SK-N-SH (cell line): ENCODE measurements at regions of chr3 and their contacts with region 1.

Region 1: GRCh38 chr3:128426128-128426921 is 40.4 kb downstream of the DNAJB8 start:
- DNase-seq: peak; percentile 95
- H3K4me3 ChIP-seq: peak overlapping the region; percentile 23 to 24; a peak in 2 of 4 replicates
- H3K27ac ChIP-seq: peak overlapping the region in 1 of 2 experiments; percentile 71; a peak in 2 of 4 replicates
- H3K4me1 ChIP-seq: peaks cover 0 to 76% of the 10 kb centered on the region in 2 experiments; a peak in 2 of 4 replicates
- H3K27me3 ChIP-seq: no peaks in the 10 kb centered on the region
- CTCF ChIP-seq: peak; percentile 72
- EP300 ChIP-seq: no peak
- RAD21 ChIP-seq: peak; percentile 84

Region 2: DNA sequence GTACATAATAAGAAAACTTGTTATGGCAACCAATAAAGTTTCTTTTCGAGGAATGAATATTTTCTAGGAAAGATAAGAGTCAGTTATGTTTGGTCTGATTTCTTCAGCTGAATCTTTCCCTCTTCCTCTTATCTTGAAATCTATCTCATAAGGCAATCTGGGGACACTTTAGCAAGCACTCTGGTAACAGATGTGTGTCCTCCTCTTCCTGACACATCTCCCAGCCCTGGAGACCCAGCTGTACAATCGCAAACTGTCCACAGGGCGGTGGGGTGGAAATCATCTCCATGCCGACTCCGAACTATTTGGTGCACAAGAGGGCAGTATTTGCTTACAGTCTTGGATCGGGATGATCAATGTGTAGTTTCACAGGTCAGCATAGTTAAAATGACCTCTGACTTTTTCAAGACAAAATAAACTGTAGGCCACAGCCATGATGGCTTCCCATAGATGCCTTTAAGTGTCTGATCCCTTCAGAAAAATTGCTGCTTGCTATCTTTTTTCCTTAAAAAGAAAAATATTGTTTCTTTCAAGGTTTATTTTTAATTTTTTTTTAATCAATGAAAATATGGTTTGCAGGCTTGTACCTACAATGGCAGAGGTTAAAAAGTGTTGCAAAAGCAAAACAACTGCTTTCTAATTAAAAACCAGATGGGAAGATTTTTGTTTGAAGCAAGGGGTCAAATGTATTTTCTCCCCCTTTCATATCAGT is 255.4 kb before region 1 on chr3:
- CTCF ChIA-PET with region 1: interaction called, 19 read pairs
- POLR2A ChIA-PET with region 1: no interaction called
- DNase-seq: peak; percentile 80
- H3K4me3 ChIP-seq: no peak overlapping the region; a peak in 1 of 4 replicates
- H3K27ac ChIP-seq: peak overlapping the region in 1 of 2 experiments; percentile 76; a peak in 2 of 4 replicates
- H3K4me1 ChIP-seq: peaks cover 0 to 73% of the 10 kb centered on the region in 2 experiments; a peak in 2 of 4 replicates
- H3K27me3 ChIP-seq: no peaks in the 10 kb centered on the region
- CTCF ChIP-seq: peak; percentile 92
- EP300 ChIP-seq: peak in 1 of 2 experiments; percentile 40; a peak in 1 of 4 replicates
- RAD21 ChIP-seq: peak; percentile 98

Region 3: GRCh38 chr3:128285056-128285966 is 141.0 kb before region 1 on chr3:
- CTCF ChIA-PET with region 1: no interaction called
- POLR2A ChIA-PET with region 1: no interaction called
- DNase-seq: no peak
- H3K4me3 ChIP-seq: no peak overlapping the region
- H3K27ac ChIP-seq: no peak overlapping the region; a peak in 2 of 4 replicates
- H3K4me1 ChIP-seq: peaks cover 5 to 68% of the 10 kb centered on the region in 2 experiments; a peak in 3 of 4 replicates
- H3K27me3 ChIP-seq: no peaks in the 10 kb centered on the region
- CTCF ChIP-seq: no peak
- EP300 ChIP-seq: no peak
- RAD21 ChIP-seq: no peak

Region 4: DNA sequence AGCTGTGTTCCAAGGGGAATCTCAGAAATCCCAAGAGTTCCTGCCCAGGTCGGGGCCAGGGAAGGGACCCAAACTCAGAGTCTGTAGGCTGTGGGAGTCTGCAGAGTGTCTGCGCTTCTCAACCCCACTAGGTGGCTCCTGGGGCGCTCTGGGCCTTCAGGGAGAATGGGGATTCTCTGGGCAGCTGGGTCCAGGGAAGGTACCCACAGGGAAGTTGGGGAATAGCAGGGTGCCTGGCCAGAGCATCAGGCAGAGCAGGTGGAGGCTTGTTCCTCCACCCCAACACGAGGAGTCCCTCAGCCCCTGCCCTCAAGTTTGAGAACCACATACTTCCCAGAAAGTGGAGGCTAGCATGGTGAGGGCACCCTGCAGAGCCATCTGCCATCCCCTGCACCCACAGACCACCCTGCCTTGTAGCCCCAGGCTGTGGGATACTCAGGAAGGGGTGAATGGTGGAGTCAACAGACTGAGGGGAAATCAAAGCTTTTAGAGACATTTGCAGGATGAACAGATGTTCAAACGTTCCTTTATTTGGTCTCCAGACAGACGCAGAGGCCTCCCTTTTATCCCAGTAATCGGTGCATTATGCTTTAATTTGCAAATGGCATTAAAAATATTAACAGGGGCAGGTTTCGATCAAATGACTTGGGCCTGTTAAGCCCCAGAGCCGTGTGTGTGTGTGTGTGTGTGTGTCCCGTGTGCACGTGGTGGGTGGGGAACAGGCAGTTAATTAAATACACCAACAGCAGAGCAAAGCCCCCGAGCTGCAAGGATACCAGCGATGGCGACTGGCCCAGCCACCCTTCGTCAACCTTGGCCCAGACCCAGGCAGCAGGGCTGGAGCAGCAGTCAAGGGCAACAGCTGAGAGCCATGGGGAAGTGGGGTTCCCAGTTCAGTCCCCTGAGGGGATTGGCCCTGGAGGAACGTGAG is 17.4 kb before region 1 on chr3:
- CTCF ChIA-PET with region 1: interaction called, 40 read pairs
- POLR2A ChIA-PET with region 1: interaction called, 21 read pairs
- DNase-seq: peak; percentile 84
- H3K4me3 ChIP-seq: peak overlapping the region in 1 of 2 experiments; percentile 34; a peak in 1 of 4 replicates
- H3K27ac ChIP-seq: peak overlapping the region in 1 of 2 experiments; percentile 100; a peak in 2 of 4 replicates
- H3K4me1 ChIP-seq: peaks cover 0 to 93% of the 10 kb centered on the region in 2 experiments; a peak in 2 of 4 replicates
- H3K27me3 ChIP-seq: no peaks in the 10 kb centered on the region
- CTCF ChIP-seq: peak; percentile 32; the same call in 1 of the 2 replicates
- EP300 ChIP-seq: peak in 1 of 2 experiments; percentile 100; a peak in 2 of 4 replicates
- RAD21 ChIP-seq: peak; percentile 38

Region 5: DNA sequence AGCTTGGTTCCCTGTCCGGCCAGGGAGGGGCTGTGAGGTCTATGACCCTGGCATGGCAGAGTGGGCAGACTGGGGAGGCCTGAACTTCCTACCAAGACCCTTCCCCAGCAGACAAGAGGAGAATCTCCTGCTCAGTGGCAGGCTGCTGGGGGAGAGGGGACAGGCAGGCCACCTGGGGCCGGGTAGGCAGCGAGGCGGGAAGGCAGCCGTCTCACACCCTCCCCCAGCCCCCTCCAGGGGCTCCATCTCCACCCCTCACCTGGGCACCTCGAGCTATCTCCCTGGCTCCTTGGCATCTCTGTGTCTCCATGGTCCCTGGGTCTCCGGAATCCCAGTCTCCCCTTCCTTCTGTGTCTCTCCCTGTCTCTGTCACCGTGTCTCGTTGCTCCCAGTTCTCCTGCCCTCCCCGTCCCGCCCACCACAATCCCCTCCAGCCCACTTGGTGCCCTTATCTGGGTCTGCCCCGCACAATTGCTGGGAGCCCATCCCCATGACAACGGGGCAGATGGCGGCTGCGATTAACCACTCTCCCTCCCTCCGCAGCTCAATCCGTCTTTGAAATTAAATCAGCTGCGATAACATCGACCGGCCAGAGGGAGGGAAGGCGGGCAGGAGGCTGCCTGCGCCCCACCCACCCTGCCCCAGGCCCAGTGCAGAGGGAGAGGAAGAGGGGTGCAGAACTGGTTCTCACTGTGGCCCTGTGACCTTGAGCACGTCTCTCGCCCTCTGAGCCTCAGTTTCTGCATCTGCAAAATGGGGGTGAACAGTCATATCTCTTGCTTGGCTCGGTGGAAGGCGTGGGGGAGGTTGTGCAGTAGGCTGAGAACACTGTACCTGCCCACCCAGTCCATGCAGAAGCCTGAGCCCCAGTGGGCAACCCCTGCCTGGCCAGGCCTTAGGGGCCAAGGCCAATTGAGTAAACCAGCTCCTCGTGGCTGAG is 30.7 kb after region 1 on chr3:
- CTCF ChIA-PET with region 1: interaction called, 29 read pairs
- POLR2A ChIA-PET with region 1: interaction called, 3 read pairs
- DNase-seq: peak; percentile 96
- H3K4me3 ChIP-seq: peak overlapping the region in 1 of 2 experiments; percentile 50; a peak in 2 of 4 replicates
- H3K27ac ChIP-seq: peak overlapping the region in 1 of 2 experiments; percentile 100; a peak in 2 of 4 replicates
- H3K4me1 ChIP-seq: peaks cover 0 to 75% of the 10 kb centered on the region in 2 experiments; a peak in 1 of 4 replicates
- H3K27me3 ChIP-seq: peaks cover 5% of the 10 kb centered on the region; the same call in 1 of the 2 replicates
- CTCF ChIP-seq: no peak
- EP300 ChIP-seq: peak in 1 of 2 experiments; percentile 98; a peak in 2 of 4 replicates
- RAD21 ChIP-seq: peak; percentile 25

Region 6: GRCh38 chr3:128476659-128477058 is 50.3 kb after region 1 on chr3:
- CTCF ChIA-PET with region 1: interaction called, 177 read pairs
- POLR2A ChIA-PET with region 1: interaction called, 16 read pairs
- DNase-seq: no peak
- H3K4me3 ChIP-seq: no peak overlapping the region
- H3K27ac ChIP-seq: peak overlapping the region in 1 of 2 experiments; percentile 39; a peak in 2 of 4 replicates
- H3K4me1 ChIP-seq: peaks cover 0 to 55% of the 10 kb centered on the region in 2 experiments; a peak in 1 of 4 replicates
- H3K27me3 ChIP-seq: peaks cover 7% of the 10 kb centered on the region
- CTCF ChIP-seq: no peak
- EP300 ChIP-seq: no peak
- RAD21 ChIP-seq: no peak

Region 7: DNA sequence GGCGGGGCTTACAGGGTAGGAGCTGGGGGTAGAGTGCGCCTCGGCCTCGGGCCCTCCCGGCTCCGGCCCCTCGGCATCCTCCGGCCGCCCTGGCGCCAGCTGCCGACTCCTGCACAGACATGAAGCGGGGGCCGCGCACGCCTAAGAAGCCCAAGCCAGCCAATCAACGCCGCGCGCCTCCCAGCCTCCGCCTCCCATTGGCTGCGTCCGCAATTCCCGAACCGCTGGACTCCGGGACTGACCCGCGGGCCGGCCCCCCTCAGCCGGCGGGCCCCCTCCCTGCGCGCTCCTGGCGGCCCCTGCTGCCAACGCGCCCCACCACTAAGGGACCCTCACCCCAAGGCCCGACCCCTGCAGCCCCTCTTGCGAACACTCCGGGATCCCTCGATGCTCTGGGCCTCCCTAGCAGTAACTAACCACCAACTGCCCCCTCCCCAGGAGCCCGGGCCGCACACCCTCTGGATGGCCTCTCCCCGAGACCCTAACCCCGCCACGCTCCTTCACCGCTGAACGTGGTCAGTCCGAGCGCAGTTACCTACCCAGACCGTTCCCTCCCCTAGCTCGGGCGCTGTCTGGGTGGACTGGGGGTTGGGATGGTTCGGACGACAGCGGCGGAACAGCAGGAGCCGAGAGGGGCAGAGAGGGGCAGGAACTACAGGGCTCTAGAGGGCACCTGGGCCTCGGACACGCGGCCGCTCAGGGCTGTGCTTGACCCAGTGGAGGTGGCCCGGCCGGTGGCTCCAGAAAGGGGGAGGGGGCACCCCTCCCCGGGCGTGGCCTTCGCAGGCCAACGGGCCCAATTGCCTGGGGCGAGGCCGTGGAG is 61.7 kb after region 1 on chr3:
- CTCF ChIA-PET with region 1: interaction called, 177 read pairs
- POLR2A ChIA-PET with region 1: interaction called, 19 read pairs
- DNase-seq: peak; percentile 82
- H3K4me3 ChIP-seq: peak overlapping the region; percentile 75 to 77
- H3K27ac ChIP-seq: peak overlapping the region; percentile 36 to 97
- H3K4me1 ChIP-seq: peaks cover 4 to 8% of the 10 kb centered on the region in 2 experiments; a peak in 3 of 4 replicates
- H3K27me3 ChIP-seq: peaks cover 23% of the 10 kb centered on the region; the same call in 1 of the 2 replicates
- CTCF ChIP-seq: no peak
- EP300 ChIP-seq: no peak
- RAD21 ChIP-seq: no peak

Region 8: DNA sequence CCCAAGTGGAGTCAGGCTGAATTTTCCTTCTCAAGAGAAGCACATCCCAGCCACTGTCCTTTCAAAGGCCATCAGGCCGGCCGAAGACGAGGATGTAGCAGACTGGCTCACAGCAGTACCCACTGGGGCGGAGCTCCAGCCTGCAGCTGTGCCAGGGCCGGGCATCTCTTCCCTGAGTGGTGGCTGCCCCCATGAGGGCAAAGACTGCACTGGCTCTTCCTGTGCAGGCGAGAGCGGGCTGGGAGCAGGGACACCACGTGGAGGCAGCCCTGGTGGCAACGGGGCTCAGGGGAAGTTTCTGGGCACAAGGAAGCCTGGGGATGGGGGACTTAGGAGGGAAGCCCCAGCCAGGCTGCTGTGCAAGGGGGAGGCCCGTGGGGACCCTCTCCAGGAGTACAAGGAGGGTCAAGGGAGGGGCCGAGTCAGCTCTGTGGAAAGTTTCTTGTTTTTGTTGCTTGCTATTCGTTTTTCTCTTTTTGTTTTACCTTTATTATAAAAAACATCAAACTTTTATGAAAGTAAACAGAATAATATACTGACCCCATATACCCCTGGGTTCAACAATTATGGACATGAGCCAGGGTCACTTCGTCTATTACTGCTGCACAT is 158.2 kb after region 1 on chr3:
- CTCF ChIA-PET with region 1: interaction called, 38 read pairs
- POLR2A ChIA-PET with region 1: no interaction called
- DNase-seq: peak; percentile 94
- H3K4me3 ChIP-seq: no peak overlapping the region
- H3K27ac ChIP-seq: peak overlapping the region in 1 of 2 experiments; percentile 43; a peak in 2 of 4 replicates
- H3K4me1 ChIP-seq: peaks cover 0 to 10% of the 10 kb centered on the region in 2 experiments; a peak in 1 of 4 replicates
- H3K27me3 ChIP-seq: no peaks in the 10 kb centered on the region
- CTCF ChIP-seq: peak; percentile 82
- EP300 ChIP-seq: no peak; a peak in 1 of 4 replicates
- RAD21 ChIP-seq: peak; percentile 99

Region 9: GRCh38 chr3:128655531-128655930 is 229.2 kb after region 1 on chr3:
- CTCF ChIA-PET with region 1: no interaction called
- POLR2A ChIA-PET with region 1: no interaction called
- DNase-seq: no peak
- H3K4me3 ChIP-seq: no peak overlapping the region
- H3K27ac ChIP-seq: no peak overlapping the region
- H3K4me1 ChIP-seq: no peaks in the 10 kb centered on the region
- H3K27me3 ChIP-seq: no peaks in the 10 kb centered on the region
- CTCF ChIP-seq: no peak
- EP300 ChIP-seq: no peak
- RAD21 ChIP-seq: no peak